Activated CD4-positive, alpha-beta memory T cell treated with anti-CD3 and anti-CD28 coated beads for 36 hours (primary cell): ENCODE measurements at regions of chr7 and their contacts with region 1.

Region 1: DNA sequence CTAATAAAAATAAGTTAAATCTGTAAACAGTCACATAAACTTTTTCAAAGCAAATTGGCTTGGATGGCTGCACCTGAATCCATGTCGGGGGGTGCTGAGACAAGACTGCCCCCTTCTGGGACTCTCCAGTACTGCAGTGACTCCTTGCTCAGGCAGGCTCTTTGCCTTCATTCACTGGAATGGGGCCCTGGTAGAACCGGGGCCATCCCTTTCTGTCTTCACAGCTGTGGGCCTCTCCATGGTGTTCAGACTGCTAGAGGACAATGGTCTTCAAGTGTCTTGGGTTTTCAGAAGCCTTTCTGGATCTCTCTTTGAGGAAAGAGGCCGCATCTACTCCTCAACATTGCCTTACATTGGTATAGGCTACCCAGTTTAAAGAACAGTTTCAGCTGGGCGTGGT is 16.1 kb upstream of the IMPDH1 start:
- DNase-seq: peak; percentile 89
- H3K4me3 Mint-ChIP-seq: no peak overlapping the region
- H3K27ac Mint-ChIP-seq: no peak overlapping the region
- H3K4me1 Mint-ChIP-seq: no peaks in the 10 kb centered on the region
- H3K27me3 Mint-ChIP-seq: peaks cover 9% of the 10 kb centered on the region

Region 2: DNA sequence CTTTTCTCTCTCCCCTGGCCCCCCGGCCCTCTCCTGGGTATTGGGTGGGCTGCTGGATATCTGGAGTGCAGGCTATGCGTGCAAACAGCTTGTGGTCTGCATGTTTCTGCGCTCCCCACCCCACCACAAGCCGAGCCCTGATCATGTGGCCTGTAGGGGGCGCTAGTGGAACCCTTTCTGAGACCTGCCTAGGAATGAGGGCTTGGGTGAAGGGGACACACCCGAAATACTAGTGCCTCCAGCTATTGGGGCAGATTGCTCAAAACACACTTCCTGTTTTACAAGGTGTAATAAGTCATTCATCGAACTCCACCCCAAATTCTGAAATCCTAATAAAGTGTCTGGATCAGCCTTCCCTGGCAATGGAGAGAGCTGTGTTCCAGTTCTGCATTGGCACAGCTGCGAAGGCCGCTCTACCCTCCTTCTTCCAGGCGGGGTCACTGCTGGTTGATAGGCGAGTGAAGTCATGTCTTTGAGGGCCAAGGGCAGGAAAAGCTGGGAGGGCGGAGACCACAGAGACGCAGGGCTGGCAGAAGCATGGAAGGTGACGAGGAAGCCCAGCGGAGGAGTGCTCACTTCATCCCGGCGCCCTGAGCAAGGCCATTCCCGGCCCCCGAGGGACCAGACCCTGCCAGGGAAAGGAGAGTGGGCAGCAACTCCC is 44.6 kb before region 1 on chr7:
- CTCF ChIA-PET with region 1: interaction called, 12 read pairs
- POLR2A ChIA-PET with region 1: no interaction called
- intact Hi-C with region 1: no loop called
- DNase-seq: peak; percentile 59
- H3K4me3 Mint-ChIP-seq: no peak overlapping the region
- H3K27ac Mint-ChIP-seq: no peak overlapping the region
- H3K4me1 Mint-ChIP-seq: no peaks in the 10 kb centered on the region
- H3K27me3 Mint-ChIP-seq: no peaks in the 10 kb centered on the region

Region 3: DNA sequence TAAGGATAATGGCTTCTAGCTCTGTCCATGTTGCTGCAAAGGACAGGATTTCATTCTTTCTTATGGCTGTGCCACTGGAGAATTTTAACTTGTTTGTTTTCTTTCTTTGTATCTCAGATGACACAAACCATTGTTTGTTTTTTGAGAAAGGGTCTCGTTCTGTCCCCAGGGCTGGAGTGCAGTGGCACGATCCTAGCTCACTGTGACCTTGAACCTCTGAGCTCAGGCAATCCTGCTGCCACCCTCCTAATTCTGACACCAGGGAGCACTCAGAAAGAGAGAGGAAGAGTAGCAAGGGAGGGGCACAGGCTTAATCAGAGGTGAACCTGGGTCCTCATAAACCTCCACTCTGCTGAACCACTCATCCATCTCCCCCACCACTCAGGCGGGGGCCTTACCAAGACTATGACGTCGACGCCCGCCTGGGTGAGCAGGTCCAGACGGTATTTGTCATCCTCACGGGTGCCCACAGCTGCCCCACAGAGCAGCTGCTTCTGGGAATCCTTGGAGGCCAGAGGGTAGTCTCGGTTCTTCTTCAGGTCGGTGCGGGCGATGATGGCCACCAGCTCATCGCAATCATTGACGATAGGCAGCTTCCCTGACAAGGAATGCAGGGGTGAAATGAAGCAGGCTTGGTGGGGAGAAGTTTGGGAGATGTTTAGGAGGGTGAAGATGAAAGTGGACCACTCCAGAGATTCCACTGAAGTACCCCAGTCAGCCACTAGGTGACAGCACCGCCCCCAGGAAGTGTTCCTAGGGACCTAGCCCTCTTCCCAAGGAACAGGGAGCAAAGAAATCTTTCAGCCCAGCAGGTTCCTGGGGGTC is 27.6 kb before region 1 on chr7:
- CTCF ChIA-PET with region 1: interaction called, 131 read pairs
- POLR2A ChIA-PET with region 1: no interaction called
- intact Hi-C with region 1: loop called (anchors 1 kb)
- DNase-seq: peak; percentile 59
- H3K4me3 Mint-ChIP-seq: no peak overlapping the region
- H3K27ac Mint-ChIP-seq: no peak overlapping the region
- H3K4me1 Mint-ChIP-seq: peaks cover 5% of the 10 kb centered on the region
- H3K27me3 Mint-ChIP-seq: no peaks in the 10 kb centered on the region

Region 4: DNA sequence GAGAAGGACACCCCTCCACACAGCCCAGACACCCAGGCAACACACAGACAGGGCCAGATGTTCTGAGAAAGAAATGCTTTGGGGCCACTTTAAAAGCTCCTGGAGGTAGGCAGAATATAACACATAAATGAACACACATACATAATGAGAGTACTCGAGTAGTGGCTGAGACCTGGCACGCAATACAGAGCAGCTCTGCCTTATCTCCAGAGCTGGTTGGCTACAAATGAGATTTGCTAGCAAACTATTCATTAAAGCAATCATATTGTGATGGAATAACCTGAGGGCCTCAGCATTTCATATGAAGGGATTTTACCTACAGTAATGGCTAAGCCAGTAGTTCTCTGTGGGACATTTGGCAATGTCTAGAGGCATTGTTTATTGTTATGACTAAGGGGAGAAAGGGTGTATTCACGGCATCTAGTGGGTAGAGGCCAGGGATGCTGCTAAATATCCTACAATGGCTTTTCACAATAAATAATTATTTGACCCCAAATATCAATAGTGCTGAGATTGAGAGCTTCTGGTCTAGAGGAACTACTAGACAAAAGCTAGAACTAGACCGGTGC is 10.5 kb before region 1 on chr7:
- CTCF ChIA-PET with region 1: interaction called, 144 read pairs
- POLR2A ChIA-PET with region 1: no interaction called
- intact Hi-C with region 1: loop called (anchors 1 kb)
- DNase-seq: no peak
- H3K4me3 Mint-ChIP-seq: no peak overlapping the region
- H3K27ac Mint-ChIP-seq: no peak overlapping the region
- H3K4me1 Mint-ChIP-seq: peaks cover 4% of the 10 kb centered on the region
- H3K27me3 Mint-ChIP-seq: peaks cover 2% of the 10 kb centered on the region

Region 5: GRCh38 chr7:128443831-128444600 is 18.2 kb after region 1 on chr7:
- CTCF ChIA-PET with region 1: interaction called, 30 read pairs
- POLR2A ChIA-PET with region 1: no interaction called
- intact Hi-C with region 1: no loop called
- DNase-seq: no peak
- H3K4me3 Mint-ChIP-seq: no peak overlapping the region
- H3K27ac Mint-ChIP-seq: no peak overlapping the region
- H3K4me1 Mint-ChIP-seq: peaks cover 7% of the 10 kb centered on the region
- H3K27me3 Mint-ChIP-seq: no peaks in the 10 kb centered on the region

Region 6: GRCh38 chr7:128455551-128456254 is 29.9 kb after region 1 on chr7 and contains the start of gene HILPDA:
- CTCF ChIA-PET with region 1: interaction called, 381 read pairs
- POLR2A ChIA-PET with region 1: interaction called, 7 read pairs
- intact Hi-C with region 1: loop called (anchors 1 kb)
- DNase-seq: peak; percentile 97
- H3K4me3 Mint-ChIP-seq: peak within 1 kb of the TSS; percentile 96
- H3K27ac Mint-ChIP-seq: peak within 1 kb of the TSS; percentile 95
- H3K4me1 Mint-ChIP-seq: peaks cover 62% of the 10 kb centered on the region
- H3K27me3 Mint-ChIP-seq: peaks cover 5% of the 10 kb centered on the region
- total RNA-seq, gene HILPDA: 48.6 to 48.8 TPM

Region 7: GRCh38 chr7:128883622-128884501 is 458.0 kb after region 1 on chr7:
- CTCF ChIA-PET with region 1: interaction called, 4 read pairs
- POLR2A ChIA-PET with region 1: no interaction called
- intact Hi-C with region 1: loop called (anchors 5 kb)
- DNase-seq: peak; percentile 88
- H3K4me3 Mint-ChIP-seq: peak overlapping the region; percentile 0
- H3K27ac Mint-ChIP-seq: no peak overlapping the region
- H3K4me1 Mint-ChIP-seq: peaks cover 1% of the 10 kb centered on the region
- H3K27me3 Mint-ChIP-seq: peaks cover 2% of the 10 kb centered on the region